Caco-2 (cell line): ENCODE measurements at regions of chr5 and their contacts with region 1.

Region 1: GRCh38 chr5:75214928-75215327 is 21.8 kb downstream of the ANKRD31 start:
- DNase-seq: peak; percentile 56 to 63
- H3K4me3 ChIP-seq: no peak overlapping the region
- H3K4me3 Mint-ChIP-seq: no peak overlapping the region
- H3K27ac Mint-ChIP-seq: peak overlapping the region; percentile 35
- H3K4me1 ChIP-seq: peaks cover 16% of the 10 kb centered on the region
- H3K4me1 Mint-ChIP-seq: peaks cover 13% of the 10 kb centered on the region
- H3K27me3 ChIP-seq: no peaks in the 10 kb centered on the region
- H3K27me3 Mint-ChIP-seq: no peaks in the 10 kb centered on the region
- CTCF ChIP-seq: no peak

Region 2: GRCh38 chr5:74974451-74975091 is 240.4 kb before region 1 on chr5:
- CTCF ChIA-PET with region 1: no interaction called
- POLR2A ChIA-PET with region 1: no interaction called
- intact Hi-C with region 1: no loop called
- DNase-seq: no peak
- H3K4me3 ChIP-seq: no peak overlapping the region
- H3K4me3 Mint-ChIP-seq: no peak overlapping the region
- H3K27ac Mint-ChIP-seq: no peak overlapping the region
- H3K4me1 ChIP-seq: peaks cover 21% of the 10 kb centered on the region
- H3K4me1 Mint-ChIP-seq: peaks cover 16% of the 10 kb centered on the region
- H3K27me3 ChIP-seq: no peaks in the 10 kb centered on the region
- H3K27me3 Mint-ChIP-seq: no peaks in the 10 kb centered on the region
- CTCF ChIP-seq: no peak

Region 3: DNA sequence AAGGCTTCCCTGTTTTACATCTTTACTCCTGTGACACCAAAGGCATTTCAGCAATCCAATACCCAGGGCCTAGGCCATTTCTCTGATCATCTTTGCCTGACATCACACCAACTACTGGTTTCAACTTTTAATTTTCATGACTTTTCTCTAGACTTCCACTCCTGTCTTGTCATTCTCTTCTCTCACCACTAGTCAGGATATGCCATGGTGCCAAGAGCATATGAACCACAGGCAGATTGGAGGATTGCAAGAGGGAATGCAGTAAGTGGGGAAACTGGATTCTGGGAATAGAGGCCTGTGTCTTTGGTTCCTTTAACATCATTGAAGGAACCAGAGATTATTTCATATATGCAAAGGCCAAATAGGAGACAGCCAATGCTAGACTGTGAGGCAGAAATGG is 47.6 kb before region 1 on chr5:
- CTCF ChIA-PET with region 1: no interaction called
- POLR2A ChIA-PET with region 1: no interaction called
- intact Hi-C with region 1: loop called (anchors 2 kb)
- DNase-seq: peak in 1 of 2 experiments; percentile 13
- H3K4me3 ChIP-seq: no peak overlapping the region
- H3K4me3 Mint-ChIP-seq: no peak overlapping the region
- H3K27ac Mint-ChIP-seq: no peak overlapping the region
- H3K4me1 ChIP-seq: peaks cover 19% of the 10 kb centered on the region
- H3K4me1 Mint-ChIP-seq: peaks cover 17% of the 10 kb centered on the region
- H3K27me3 ChIP-seq: no peaks in the 10 kb centered on the region
- H3K27me3 Mint-ChIP-seq: no peaks in the 10 kb centered on the region
- CTCF ChIP-seq: peak in 1 of 2 experiments; percentile 19

Region 4: GRCh38 chr5:75340714-75341478 is 126.0 kb after region 1 on chr5:
- CTCF ChIA-PET with region 1: no interaction called
- POLR2A ChIA-PET with region 1: no interaction called
- intact Hi-C with region 1: no loop called
- DNase-seq: no peak
- H3K4me3 ChIP-seq: no peak overlapping the region
- H3K4me3 Mint-ChIP-seq: peak overlapping the region; percentile 56
- H3K27ac Mint-ChIP-seq: no peak overlapping the region
- H3K4me1 ChIP-seq: peaks cover 19% of the 10 kb centered on the region
- H3K4me1 Mint-ChIP-seq: peaks cover 11% of the 10 kb centered on the region
- H3K27me3 ChIP-seq: no peaks in the 10 kb centered on the region
- H3K27me3 Mint-ChIP-seq: no peaks in the 10 kb centered on the region
- CTCF ChIP-seq: no peak